ENCODE measurements at regions of chr20 and their contacts with region 1.

Region 1: GRCh38 chr20:58810116-58810878 is 40.4 kb downstream of the GNAS-AS1 start:
- DNase-seq: no peak
- H3K4me3 ChIP-seq: no peak overlapping the region
- H3K4me3 Mint-ChIP-seq: no peak overlapping the region
- H3K27ac Mint-ChIP-seq: no peak overlapping the region
- H3K4me1 ChIP-seq: no peaks in the 10 kb centered on the region
- H3K4me1 Mint-ChIP-seq: no peaks in the 10 kb centered on the region
- H3K27me3 ChIP-seq: peaks cover 1% of the 10 kb centered on the region; the same call in 1 of the 2 replicates
- H3K27me3 Mint-ChIP-seq: peaks cover 35% of the 10 kb centered on the region
- CTCF ChIP-seq: no peak

Region 2: DNA sequence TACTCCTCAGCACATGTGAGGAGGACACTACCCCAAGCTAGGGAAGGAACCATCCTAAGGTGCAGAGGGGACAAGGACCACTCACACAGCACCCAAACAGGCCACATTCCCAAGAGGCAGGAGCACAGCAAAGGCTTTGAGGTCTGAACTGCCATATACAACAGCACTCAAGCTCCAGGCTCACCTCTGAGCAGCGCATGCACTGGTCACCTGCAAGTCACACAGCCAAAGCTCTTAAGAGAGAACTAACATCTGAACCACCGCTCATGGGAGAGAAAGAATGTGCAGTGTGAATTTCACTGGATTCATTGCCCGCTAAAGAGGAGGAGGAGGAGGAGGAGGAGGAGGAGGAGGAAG is 86.7 kb before region 1 on chr20:
- CTCF ChIA-PET with region 1: interaction called, 3 read pairs
- POLR2A ChIA-PET with region 1: interaction called, 10 read pairs
- intact Hi-C with region 1: no loop called
- DNase-seq: peak in 1 of 2 experiments; percentile 38
- H3K4me3 ChIP-seq: no peak overlapping the region
- H3K4me3 Mint-ChIP-seq: no peak overlapping the region
- H3K27ac Mint-ChIP-seq: no peak overlapping the region
- H3K4me1 ChIP-seq: no peaks in the 10 kb centered on the region
- H3K4me1 Mint-ChIP-seq: no peaks in the 10 kb centered on the region
- H3K27me3 ChIP-seq: peaks cover 6% of the 10 kb centered on the region
- H3K27me3 Mint-ChIP-seq: peaks cover 46% of the 10 kb centered on the region
- CTCF ChIP-seq: no peak

Region 3: GRCh38 chr20:58829531-58829941 is 19.2 kb after region 1 on chr20:
- CTCF ChIA-PET with region 1: no interaction called
- POLR2A ChIA-PET with region 1: no interaction called
- intact Hi-C with region 1: no loop called
- DNase-seq: no peak
- H3K4me3 ChIP-seq: no peak overlapping the region
- H3K4me3 Mint-ChIP-seq: no peak overlapping the region
- H3K27ac Mint-ChIP-seq: no peak overlapping the region
- H3K4me1 ChIP-seq: no peaks in the 10 kb centered on the region
- H3K4me1 Mint-ChIP-seq: no peaks in the 10 kb centered on the region
- H3K27me3 ChIP-seq: no peaks in the 10 kb centered on the region
- H3K27me3 Mint-ChIP-seq: peaks cover 20% of the 10 kb centered on the region
- CTCF ChIP-seq: peak in 1 of 2 experiments; percentile 4

Region 4: GRCh38 chr20:59074445-59074844 is 264.1 kb after region 1 on chr20:
- CTCF ChIA-PET with region 1: no interaction called
- POLR2A ChIA-PET with region 1: no interaction called
- intact Hi-C with region 1: no loop called
- DNase-seq: no peak
- H3K4me3 ChIP-seq: no peak overlapping the region
- H3K4me3 Mint-ChIP-seq: no peak overlapping the region
- H3K27ac Mint-ChIP-seq: no peak overlapping the region
- H3K4me1 ChIP-seq: no peaks in the 10 kb centered on the region
- H3K4me1 Mint-ChIP-seq: no peaks in the 10 kb centered on the region
- H3K27me3 ChIP-seq: peaks cover 4% of the 10 kb centered on the region; the same call in 1 of the 2 replicates
- H3K27me3 Mint-ChIP-seq: peaks cover 39% of the 10 kb centered on the region
- CTCF ChIP-seq: no peak

Measured in Caco-2 (cell line).